ENCODE measurements at regions of chr11 and their contacts with region 1.

Region 1: DNA sequence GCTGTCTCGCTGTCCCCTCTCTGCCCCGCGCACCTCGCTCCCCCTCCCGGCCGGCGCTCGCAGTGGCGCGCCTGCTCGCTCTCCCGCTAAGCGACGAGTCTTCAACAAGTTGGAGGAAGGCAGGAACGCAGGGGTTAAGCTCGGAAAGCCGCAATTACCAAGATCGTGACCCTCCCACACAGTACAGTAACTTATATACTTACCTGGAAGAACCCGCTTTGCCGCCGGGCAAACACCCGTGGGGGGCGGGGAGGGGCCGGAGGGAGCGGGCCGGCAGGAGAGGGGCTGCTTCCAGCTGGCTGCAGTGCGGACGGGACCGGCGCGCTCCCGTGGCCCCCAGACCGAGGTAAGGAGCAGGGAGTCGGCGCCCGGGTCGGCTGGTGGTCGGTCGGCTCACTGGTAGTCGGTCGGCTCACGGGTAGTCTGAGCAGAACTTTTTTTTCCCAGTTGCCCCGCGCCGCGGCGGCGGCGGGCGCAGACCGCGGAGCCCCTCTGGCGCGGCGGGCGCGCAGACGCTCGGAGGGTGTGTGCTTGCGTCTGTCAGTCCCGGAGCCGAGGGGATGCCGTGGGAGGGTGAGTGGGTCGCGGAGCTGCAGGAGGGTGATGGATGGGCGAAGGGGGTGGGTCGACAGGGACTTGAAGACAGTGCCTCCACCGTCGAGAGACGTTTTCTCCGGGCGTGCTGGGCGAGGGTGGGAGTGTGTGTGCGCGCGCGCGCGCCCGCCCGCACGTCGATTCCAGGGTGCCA is 101.2 kb upstream of the HSD17B12 start:
- DNase-seq: peak; percentile 41 to 57 (median 46)
- ATAC-seq: peak; percentile 79
- H3K4me3 ChIP-seq: peak overlapping the region; percentile 47
- H3K27ac ChIP-seq: no peak overlapping the region
- H3K4me1 ChIP-seq: peaks cover 0 to 26% of the 10 kb centered on the region in 2 experiments; a peak in 3 of 5 replicates
- H3K27me3 ChIP-seq: peaks cover 32 to 83% of the 10 kb centered on the region in 2 experiments
- CTCF ChIP-seq: peak; percentile 24 to 47 (median 39); a peak in 4 of 6 replicates
- EP300 ChIP-seq: no peak
- POLR2A ChIP-seq: no peak
- RAD21 ChIP-seq: 0 out of 4 replicates have a peak, but pooled peaks of 1 of the 2 experiments have one; percentile 19

Region 2: DNA sequence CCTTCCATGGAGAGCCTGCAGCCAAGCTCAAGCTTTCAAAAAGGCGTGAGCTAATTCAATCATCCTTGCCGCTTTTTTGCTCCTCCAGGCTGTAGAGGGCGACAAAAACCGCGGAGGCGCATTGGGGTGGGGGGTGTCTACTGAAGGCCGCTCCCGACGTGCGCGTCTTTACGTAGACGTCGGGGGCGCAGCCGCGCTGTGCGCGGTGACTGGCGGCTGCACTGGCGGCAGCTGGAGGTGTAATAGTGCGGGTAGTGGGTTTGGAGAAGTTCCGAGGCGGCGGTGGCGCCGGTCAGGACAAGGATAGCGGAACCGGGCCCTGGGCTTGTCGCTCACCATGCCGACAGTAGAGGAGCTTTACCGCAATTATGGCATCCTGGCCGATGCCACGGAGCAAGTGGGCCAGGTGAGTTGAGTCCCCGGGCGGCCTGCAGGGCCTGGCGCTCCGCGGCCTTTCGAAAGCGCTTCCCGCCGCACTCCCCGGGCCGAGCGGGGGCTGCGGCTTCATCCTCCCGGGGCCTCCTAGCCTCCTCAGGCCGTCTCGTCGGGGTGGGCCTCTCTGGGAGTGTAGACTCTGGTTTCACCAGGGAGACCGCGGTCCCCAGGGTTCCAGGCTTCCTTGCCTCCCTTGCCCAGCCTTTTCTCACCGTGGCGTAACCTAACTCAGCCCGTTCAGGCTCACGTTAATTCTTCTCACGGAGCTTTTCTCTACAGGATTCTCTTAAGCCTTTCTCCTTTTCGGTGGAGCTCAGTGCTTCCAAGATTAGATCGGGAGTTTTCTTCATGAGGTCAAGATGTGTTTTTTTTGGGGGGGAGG is 267.3 kb before region 1 on chr11 and contains the start of gene API5:
- CTCF ChIA-PET with region 1: no interaction called
- POLR2A ChIA-PET with region 1: no interaction called
- in situ Hi-C with region 1: no loop called
- intact Hi-C with region 1: loop called (anchors 10 kb)
- DNase-seq: peak; percentile 79 to 97 (median 84)
- ATAC-seq: peak; percentile 97
- H3K4me3 ChIP-seq: peak within 1 kb of the TSS; percentile 60
- H3K27ac ChIP-seq: peak within 1 kb of the TSS; percentile 74
- H3K4me1 ChIP-seq: peaks cover 4 to 6% of the 10 kb centered on the region in 2 experiments; a peak in 4 of 5 replicates
- H3K27me3 ChIP-seq: no peaks in the 10 kb centered on the region
- CTCF ChIP-seq: peak; percentile 85 to 94 (median 85)
- EP300 ChIP-seq: peak; percentile 43; the same call in 1 of the 2 replicates
- POLR2A ChIP-seq: peak; percentile 92
- RAD21 ChIP-seq: peak; percentile 39 to 49
- polyA plus RNA-seq, gene API5: 59.8 to 111 TPM

Region 3: GRCh38 chr11:43680521-43681400 is 101.4 kb after region 1 on chr11 and contains the start of gene HSD17B12:
- CTCF ChIA-PET with region 1: no interaction called
- POLR2A ChIA-PET with region 1: no interaction called
- in situ Hi-C with region 1: no loop called
- intact Hi-C with region 1: no loop called
- DNase-seq: peak; percentile 66 to 83 (median 72)
- ATAC-seq: peak; percentile 91
- H3K4me3 ChIP-seq: peak within 1 kb of the TSS; percentile 45
- H3K27ac ChIP-seq: peak within 1 kb of the TSS; percentile 76
- H3K4me1 ChIP-seq: peaks cover 5 to 12% of the 10 kb centered on the region in 2 experiments; a peak in 3 of 5 replicates
- H3K27me3 ChIP-seq: no peaks in the 10 kb centered on the region
- CTCF ChIP-seq: no peak
- EP300 ChIP-seq: no peak
- POLR2A ChIP-seq: peak; percentile 73
- RAD21 ChIP-seq: no peak
- polyA plus RNA-seq, gene HSD17B12: 9.1 to 10.3 TPM

Region 4: DNA sequence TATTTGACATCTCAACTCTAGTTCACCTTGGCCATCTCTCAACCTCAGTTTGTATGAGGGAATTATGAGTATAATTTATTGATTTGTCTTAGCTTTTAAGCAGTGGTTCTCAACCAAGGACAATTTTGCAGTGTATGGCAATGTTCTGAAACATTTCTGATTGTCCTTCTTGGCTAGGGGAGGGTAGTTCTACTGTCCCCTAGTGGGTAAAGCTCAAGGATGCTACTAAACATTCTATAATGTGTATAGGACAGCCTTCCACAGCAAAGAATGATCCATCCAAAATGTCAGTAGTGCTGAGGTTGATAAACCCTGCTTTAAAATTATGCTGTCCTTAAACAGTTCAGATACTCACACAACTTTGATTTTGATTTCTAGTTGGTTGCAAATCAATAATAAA is 223.2 kb after region 1 on chr11:
- CTCF ChIA-PET with region 1: no interaction called
- POLR2A ChIA-PET with region 1: interaction called, 4 read pairs
- in situ Hi-C with region 1: loop called (anchors 10 kb)
- intact Hi-C with region 1: loop called (anchors 5 kb)
- DNase-seq: peak in 2 of 4 experiments; percentile 30 to 32
- ATAC-seq: peak; percentile 86
- H3K4me3 ChIP-seq: no peak overlapping the region
- H3K27ac ChIP-seq: no peak overlapping the region
- H3K4me1 ChIP-seq: no peaks in the 10 kb centered on the region
- H3K27me3 ChIP-seq: no peaks in the 10 kb centered on the region
- CTCF ChIP-seq: peak; percentile 40 to 62 (median 47); a peak in 5 of 6 replicates
- EP300 ChIP-seq: no peak
- POLR2A ChIP-seq: no peak
- RAD21 ChIP-seq: peak; percentile 38 to 65; a peak in 3 of 4 replicates